PC-9 (cell line): ENCODE measurements at regions of chr9 and their contacts with region 1.

Region 1: DNA sequence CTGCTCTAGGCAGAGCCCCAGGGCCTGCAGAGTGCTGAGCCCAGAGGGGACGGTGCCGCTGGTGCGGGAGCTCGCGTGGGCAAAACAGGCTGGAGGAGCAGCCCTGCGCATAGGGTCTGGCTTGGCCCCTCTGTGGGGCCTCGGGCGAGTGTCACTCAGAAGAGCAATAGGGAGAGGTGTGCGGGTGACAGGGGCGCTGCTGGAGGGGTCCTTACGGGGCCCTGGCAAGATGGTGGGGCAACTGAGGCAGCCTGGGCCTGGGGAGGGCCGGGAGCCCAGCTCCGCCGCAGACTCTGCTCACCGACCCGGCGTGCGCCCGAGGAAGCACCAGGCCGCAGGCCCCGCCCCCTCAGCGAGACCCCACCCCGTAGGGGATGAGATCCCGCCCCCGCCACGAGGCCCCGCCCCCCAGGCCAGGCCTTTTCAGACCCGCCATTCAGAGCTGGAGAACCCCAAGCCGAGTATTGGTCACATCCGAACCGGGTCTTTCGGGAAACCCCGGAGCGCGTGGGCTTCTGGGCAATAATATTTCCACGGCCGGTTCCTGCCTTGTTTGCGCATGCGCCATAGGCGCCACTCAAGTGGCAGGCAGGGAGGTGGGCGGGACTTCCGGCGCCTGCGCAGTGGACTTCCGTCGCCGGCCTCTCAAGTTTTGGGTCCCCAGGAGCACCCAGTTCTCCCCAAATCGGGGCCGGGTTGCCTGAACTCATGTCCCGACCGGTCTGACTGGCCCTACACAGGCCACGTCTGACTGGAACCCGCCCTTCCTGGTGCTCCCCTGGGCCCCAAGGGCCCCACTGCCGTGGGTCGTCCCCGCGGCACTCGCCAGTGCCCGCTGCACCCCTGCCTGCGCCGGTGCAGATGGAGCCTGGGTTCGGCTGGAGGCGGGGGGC is 1.3 kb upstream of the RNF208 start:
- DNase-seq: peak; percentile 95 to 99
- H3K4me3 ChIP-seq: peak overlapping the region; percentile 90
- H3K27ac ChIP-seq: peak overlapping the region; percentile 79
- H3K4me1 ChIP-seq: peaks cover 54% of the 10 kb centered on the region
- H3K27me3 ChIP-seq: no peaks in the 10 kb centered on the region
- CTCF ChIP-seq: no peak

Region 2: GRCh38 chr9:136820971-136821825 is 402.1 kb before region 1 on chr9:
- CTCF ChIA-PET with region 1: interaction called, 12 read pairs
- POLR2A ChIA-PET with region 1: no interaction called
- intact Hi-C with region 1: no loop called
- DNase-seq: no peak
- H3K4me3 ChIP-seq: no peak overlapping the region
- H3K27ac ChIP-seq: no peak overlapping the region
- H3K4me1 ChIP-seq: no peaks in the 10 kb centered on the region
- H3K27me3 ChIP-seq: no peaks in the 10 kb centered on the region
- CTCF ChIP-seq: no peak

Region 3: GRCh38 chr9:137114610-137115391 is 108.5 kb before region 1 on chr9 and contains the start of gene DPP7:
- CTCF ChIA-PET with region 1: interaction called, 4 read pairs
- POLR2A ChIA-PET with region 1: no interaction called
- intact Hi-C with region 1: loop called (anchors 1 kb)
- DNase-seq: peak in 1 of 2 experiments; percentile 74
- H3K4me3 ChIP-seq: peak within 1 kb of the TSS; percentile 72
- H3K27ac ChIP-seq: no peak within 1 kb of the TSS
- H3K4me1 ChIP-seq: peaks cover 6% of the 10 kb centered on the region
- H3K27me3 ChIP-seq: no peaks in the 10 kb centered on the region
- CTCF ChIP-seq: no peak
- total RNA-seq, gene DPP7: 104 and 126 TPM in 2 replicates

Region 4: DNA sequence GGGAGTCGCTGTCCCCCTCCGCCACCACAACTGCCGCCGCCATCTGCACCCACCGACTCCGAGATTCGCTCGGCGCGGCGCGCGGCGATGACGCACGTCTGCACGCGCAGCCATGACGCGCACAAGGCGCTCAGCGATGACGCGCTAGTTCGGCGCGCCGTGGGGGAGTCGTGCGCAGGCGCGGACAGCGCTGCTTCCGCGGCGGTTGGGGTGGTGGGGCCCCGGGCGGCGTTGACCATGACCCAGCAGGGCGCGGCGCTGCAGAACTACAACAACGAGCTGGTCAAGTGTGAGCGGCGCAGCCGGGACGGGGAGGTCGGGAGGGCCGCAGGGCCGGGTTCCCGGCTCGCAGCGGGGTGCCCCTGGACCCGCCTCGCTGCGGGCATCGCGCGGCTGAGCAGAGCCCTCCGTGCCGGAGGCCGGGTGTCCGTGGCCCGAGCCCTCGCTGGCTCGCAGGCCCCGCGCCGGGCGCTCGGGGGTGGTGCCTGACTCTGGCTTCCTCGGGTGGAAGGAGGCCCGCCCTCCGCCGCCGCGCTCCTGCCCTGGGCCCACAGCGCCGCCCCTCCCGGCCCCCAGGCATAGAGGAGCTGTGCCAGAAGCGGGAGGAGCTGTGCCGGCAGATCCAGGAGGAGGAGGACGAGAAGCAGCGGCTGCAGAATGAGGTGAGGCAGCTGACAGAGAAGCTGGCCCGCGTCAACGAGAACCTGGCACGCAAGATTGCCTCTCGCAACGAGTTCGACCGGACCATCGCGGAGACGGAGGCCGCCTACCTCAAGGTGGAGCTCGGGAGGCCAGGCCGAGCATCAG is 34.6 kb before region 1 on chr9 and contains the starts of genes ANAPC2 and SSNA1:
- CTCF ChIA-PET with region 1: interaction called, 15 read pairs
- POLR2A ChIA-PET with region 1: interaction called, 13 read pairs
- intact Hi-C with region 1: loop called (anchors 1 kb)
- DNase-seq: peak; percentile 81 to 98
- H3K4me3 ChIP-seq: peak within 1 kb of the TSS; percentile 97
- H3K27ac ChIP-seq: peak within 1 kb of the TSS; percentile 74
- H3K4me1 ChIP-seq: peaks cover 33% of the 10 kb centered on the region
- H3K27me3 ChIP-seq: no peaks in the 10 kb centered on the region
- CTCF ChIP-seq: peak; percentile 44; the same call in 1 of the 2 replicates
- total RNA-seq, gene ANAPC2: 92.1 and 95.4 TPM in 2 replicates
- total RNA-seq, gene SSNA1: 98.7 and 109 TPM in 2 replicates

Region 5: DNA sequence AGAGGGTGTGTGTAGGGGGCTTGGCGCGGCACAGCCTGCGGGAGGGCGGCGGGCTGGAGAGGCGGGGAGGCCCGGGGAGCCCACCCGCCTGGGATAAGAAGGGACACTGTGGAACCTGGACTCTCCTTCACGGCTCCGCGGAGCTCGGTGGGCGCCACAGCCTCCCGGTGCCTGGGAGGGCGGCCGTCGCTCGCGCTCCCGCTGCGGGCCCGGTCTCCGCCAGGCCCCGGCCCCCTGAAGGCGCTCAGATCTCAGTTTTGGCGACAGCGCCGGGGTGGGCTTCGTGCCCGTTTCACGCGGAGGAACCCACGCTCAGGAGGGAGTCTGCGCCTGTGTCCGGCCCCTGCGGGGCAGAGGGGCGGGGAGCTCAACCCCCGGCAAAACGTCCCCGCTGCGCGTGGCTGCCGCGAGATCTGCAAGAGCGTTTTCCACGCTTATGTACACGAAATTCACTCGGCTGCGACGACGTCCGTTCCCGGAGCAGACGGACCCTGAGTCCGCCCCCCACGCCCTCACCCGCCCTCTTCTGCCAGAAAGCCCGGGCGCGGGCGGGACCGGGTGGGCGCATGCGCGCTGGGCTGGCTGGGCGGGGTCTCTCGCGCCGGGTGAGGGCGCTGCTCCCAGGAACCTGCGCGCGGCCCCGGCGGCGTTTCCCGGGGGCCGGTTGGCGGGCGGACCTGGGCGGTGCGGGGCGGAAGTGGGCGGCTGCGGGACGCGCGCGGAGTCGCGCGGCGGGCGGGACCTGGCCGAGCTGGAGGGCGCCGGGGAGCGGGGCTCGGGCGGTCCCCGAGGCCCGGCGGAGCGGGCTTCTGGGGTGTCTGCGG is 31.5 kb after region 1 on chr9 and contains the start of gene NELFB:
- CTCF ChIA-PET with region 1: no interaction called
- POLR2A ChIA-PET with region 1: no interaction called
- intact Hi-C with region 1: loop called (anchors 1 kb)
- DNase-seq: peak; percentile 64 to 98
- H3K4me3 ChIP-seq: peak within 1 kb of the TSS; percentile 92
- H3K27ac ChIP-seq: 0 out of 2 replicates have a peak within 1 kb of the TSS, but pooled peaks have one; percentile 37
- H3K4me1 ChIP-seq: peaks cover 22% of the 10 kb centered on the region
- H3K27me3 ChIP-seq: no peaks in the 10 kb centered on the region
- CTCF ChIP-seq: no peak
- total RNA-seq, gene NELFB: 94.2 and 103 TPM in 2 replicates

Region 6: GRCh38 chr9:137326445-137327065 is 103.2 kb after region 1 on chr9:
- CTCF ChIA-PET with region 1: no interaction called
- POLR2A ChIA-PET with region 1: no interaction called
- intact Hi-C with region 1: no loop called
- DNase-seq: no peak
- H3K4me3 ChIP-seq: no peak overlapping the region
- H3K27ac ChIP-seq: no peak overlapping the region
- H3K4me1 ChIP-seq: no peaks in the 10 kb centered on the region
- H3K27me3 ChIP-seq: peaks cover 12% of the 10 kb centered on the region
- CTCF ChIP-seq: no peak

Region 7: GRCh38 chr9:137590462-137591383 is 367.4 kb after region 1 on chr9 and contains the start of gene ZMYND19:
- CTCF ChIA-PET with region 1: no interaction called
- POLR2A ChIA-PET with region 1: interaction called, 17 read pairs
- intact Hi-C with region 1: no loop called
- DNase-seq: peak; percentile 65 to 94
- H3K4me3 ChIP-seq: peak within 1 kb of the TSS; percentile 91
- H3K27ac ChIP-seq: no peak within 1 kb of the TSS
- H3K4me1 ChIP-seq: peaks cover 13% of the 10 kb centered on the region
- H3K27me3 ChIP-seq: no peaks in the 10 kb centered on the region
- CTCF ChIP-seq: no peak; the same call in 1 of the 2 replicates
- total RNA-seq, gene ZMYND19: 47.7 and 49.2 TPM in 2 replicates